ENCODE measurements at regions of chr16 and their contacts with region 1.

Region 1: GRCh38 chr16:46908540-46909372 is 24.6 kb downstream of the GPT2 start:
- DNase-seq: peak; percentile 31 to 69 (median 38)
- H3K4me3 ChIP-seq: no peak overlapping the region
- H3K4me3 Mint-ChIP-seq: no peak overlapping the region
- H3K27ac ChIP-seq: no peak overlapping the region
- H3K27ac Mint-ChIP-seq: no peak overlapping the region
- H3K4me1 ChIP-seq: no peaks in the 10 kb centered on the region
- H3K4me1 Mint-ChIP-seq: peaks cover 0 to 5% (median 0%) of the 10 kb centered on the region in 3 donors
- H3K27me3 ChIP-seq: no peaks in the 10 kb centered on the region
- H3K27me3 Mint-ChIP-seq: no peaks in the 10 kb centered on the region

Region 2: GRCh38 chr16:46673320-46674013 is 235.3 kb before region 1 on chr16:
- CTCF ChIA-PET with region 1: interaction called, 30 read pairs
- POLR2A ChIA-PET with region 1: no interaction called
- DNase-seq: peak; percentile 16 to 64 (median 36)
- H3K4me3 ChIP-seq: no peak overlapping the region
- H3K4me3 Mint-ChIP-seq: no peak overlapping the region
- H3K27ac ChIP-seq: no peak overlapping the region
- H3K27ac Mint-ChIP-seq: peak overlapping the region in 2 of 8 donors; percentile 56 to 58
- H3K4me1 ChIP-seq: no peaks in the 10 kb centered on the region
- H3K4me1 Mint-ChIP-seq: no peaks in the 10 kb centered on the region
- H3K27me3 ChIP-seq: no peaks in the 10 kb centered on the region
- H3K27me3 Mint-ChIP-seq: no peaks in the 10 kb centered on the region

Region 3: GRCh38 chr16:46853713-46854443 is 54.9 kb before region 1 on chr16:
- CTCF ChIA-PET with region 1: interaction called, 44 read pairs
- POLR2A ChIA-PET with region 1: no interaction called
- DNase-seq: peak; percentile 6 to 65 (median 30)
- H3K4me3 ChIP-seq: no peak overlapping the region
- H3K4me3 Mint-ChIP-seq: no peak overlapping the region
- H3K27ac ChIP-seq: no peak overlapping the region
- H3K27ac Mint-ChIP-seq: no peak overlapping the region
- H3K4me1 ChIP-seq: no peaks in the 10 kb centered on the region
- H3K4me1 Mint-ChIP-seq: no peaks in the 10 kb centered on the region
- H3K27me3 ChIP-seq: no peaks in the 10 kb centered on the region
- H3K27me3 Mint-ChIP-seq: peaks cover 0 to 4% of the 10 kb centered on the region in 2 donors

Region 4: GRCh38 chr16:46891910-46892309 is 16.8 kb before region 1 on chr16:
- CTCF ChIA-PET with region 1: no interaction called
- POLR2A ChIA-PET with region 1: no interaction called
- DNase-seq: no peak
- H3K4me3 ChIP-seq: no peak overlapping the region
- H3K4me3 Mint-ChIP-seq: no peak overlapping the region
- H3K27ac ChIP-seq: no peak overlapping the region
- H3K27ac Mint-ChIP-seq: no peak overlapping the region
- H3K4me1 ChIP-seq: no peaks in the 10 kb centered on the region
- H3K4me1 Mint-ChIP-seq: no peaks in the 10 kb centered on the region
- H3K27me3 ChIP-seq: no peaks in the 10 kb centered on the region
- H3K27me3 Mint-ChIP-seq: peaks cover 2 to 12% of the 10 kb centered on the region in 2 donors

Measured in CD8-positive, alpha-beta memory T cell (primary cell).